ENCODE measurements at regions of chr2 and their contacts with region 1.

Region 1: DNA sequence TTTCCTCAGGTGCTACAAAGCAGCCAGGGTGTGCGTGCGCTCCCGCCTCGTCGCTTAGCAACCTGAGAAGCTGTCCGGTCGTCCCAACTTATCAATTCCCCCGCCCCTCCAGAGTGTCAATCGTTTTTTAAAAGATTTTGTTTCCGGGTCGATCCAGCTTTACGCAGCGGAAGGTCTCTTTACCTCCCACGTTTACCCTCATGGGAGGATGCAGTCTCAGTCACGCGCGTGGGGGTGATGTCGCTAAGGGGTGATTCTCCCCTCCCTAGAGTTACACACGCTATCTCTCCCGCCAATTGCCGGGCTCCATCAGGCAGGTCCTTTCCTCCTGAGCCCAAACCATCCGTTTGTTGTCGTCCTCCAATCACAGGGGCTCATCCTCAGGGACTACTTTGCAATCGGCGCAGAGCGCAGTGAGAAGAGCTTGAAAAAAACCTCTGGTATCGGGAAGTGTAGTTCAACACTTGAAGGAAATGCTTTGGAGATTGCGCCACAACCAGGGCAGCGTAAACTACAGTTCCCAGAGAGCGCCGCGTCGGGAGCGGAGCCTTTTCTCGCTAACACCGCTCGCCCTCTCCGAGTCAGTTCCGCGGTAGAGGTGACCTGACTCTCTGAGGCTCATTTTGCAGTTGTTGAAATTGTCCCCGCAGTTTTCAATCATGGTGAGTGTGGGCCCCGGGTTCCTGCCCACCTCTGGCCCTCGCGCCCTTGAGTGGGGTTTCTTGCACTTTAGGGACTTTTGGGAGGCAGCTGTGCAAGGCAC is at the starts of genes MDH1 and WDPCP:
- DNase-seq: peak; percentile 86 to 99 (median 88)
- ATAC-seq: peak; percentile 86
- H3K4me3 ChIP-seq: peak within 1 kb of the TSS; percentile 96
- H3K4me3 Mint-ChIP-seq: peak within 1 kb of the TSS; percentile 93
- H3K27ac ChIP-seq: peak within 1 kb of the TSS; percentile 76 to 95
- H3K27ac Mint-ChIP-seq: peak within 1 kb of the TSS; percentile 87
- H3K4me1 ChIP-seq: peaks cover 19% of the 10 kb centered on the region
- H3K4me1 Mint-ChIP-seq: peaks cover 58% of the 10 kb centered on the region
- H3K27me3 ChIP-seq: no peaks in the 10 kb centered on the region
- H3K27me3 Mint-ChIP-seq: no peaks in the 10 kb centered on the region
- CTCF ChIP-seq: no peak
- total RNA-seq, gene MDH1: 96.3 to 97.6 TPM
- total RNA-seq, gene WDPCP: 8.7 to 9.9 TPM

Region 2: DNA sequence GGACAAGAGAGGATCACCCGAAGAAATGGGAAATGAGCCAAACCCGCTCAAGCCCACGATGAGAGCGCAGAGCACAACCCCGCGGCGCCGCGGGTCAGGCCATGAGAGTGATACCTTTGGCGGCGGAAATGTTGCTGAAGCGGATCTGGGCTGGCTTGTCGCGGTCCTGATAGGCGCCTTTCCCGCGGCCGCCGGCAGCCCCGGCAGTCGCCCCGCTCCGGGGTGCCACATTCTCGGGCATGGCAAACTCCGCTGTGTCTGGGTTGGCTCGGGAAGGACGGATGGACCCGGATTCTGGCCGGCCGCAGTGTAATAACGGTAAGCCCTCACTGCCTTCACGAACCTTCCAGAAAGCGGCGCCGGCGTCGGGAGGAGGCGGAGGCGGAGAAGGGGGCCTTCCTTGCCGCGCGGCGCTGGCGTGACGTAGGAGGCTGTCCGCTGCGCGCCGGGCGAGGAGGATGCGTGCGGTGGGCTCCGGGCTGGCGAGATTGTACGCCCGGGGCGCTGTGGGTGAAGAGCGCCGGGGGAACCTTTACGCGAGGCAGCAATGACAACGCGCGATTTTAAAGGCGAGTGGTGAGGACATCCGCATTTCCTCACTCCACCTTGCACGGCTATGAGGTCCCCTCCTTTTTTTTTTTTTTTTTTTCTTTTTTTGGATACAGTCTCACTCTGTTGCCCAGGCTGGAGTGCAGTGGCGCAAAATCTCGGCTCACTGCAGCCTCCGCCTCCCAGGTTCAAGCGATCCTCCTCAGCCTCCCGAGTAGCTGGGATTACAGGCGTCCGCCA is 1700.1 kb before region 1 on chr2 and contains the start of gene CCT4:
- CTCF ChIA-PET with region 1: no interaction called
- POLR2A ChIA-PET with region 1: no interaction called
- intact Hi-C with region 1: loop called in 1 of 2 experiments (anchors 5 kb)
- DNase-seq: peak; percentile 83 to 96 (median 88)
- ATAC-seq: peak; percentile 79
- H3K4me3 ChIP-seq: peak within 1 kb of the TSS; percentile 79
- H3K4me3 Mint-ChIP-seq: peak within 1 kb of the TSS; percentile 100
- H3K27ac ChIP-seq: peak within 1 kb of the TSS; percentile 90 to 98
- H3K27ac Mint-ChIP-seq: peak within 1 kb of the TSS; percentile 100
- H3K4me1 ChIP-seq: peaks cover 19% of the 10 kb centered on the region
- H3K4me1 Mint-ChIP-seq: peaks cover 38% of the 10 kb centered on the region
- H3K27me3 ChIP-seq: no peaks in the 10 kb centered on the region
- H3K27me3 Mint-ChIP-seq: no peaks in the 10 kb centered on the region
- CTCF ChIP-seq: no peak
- total RNA-seq, gene CCT4: 100 to 114 TPM

Region 3: DNA sequence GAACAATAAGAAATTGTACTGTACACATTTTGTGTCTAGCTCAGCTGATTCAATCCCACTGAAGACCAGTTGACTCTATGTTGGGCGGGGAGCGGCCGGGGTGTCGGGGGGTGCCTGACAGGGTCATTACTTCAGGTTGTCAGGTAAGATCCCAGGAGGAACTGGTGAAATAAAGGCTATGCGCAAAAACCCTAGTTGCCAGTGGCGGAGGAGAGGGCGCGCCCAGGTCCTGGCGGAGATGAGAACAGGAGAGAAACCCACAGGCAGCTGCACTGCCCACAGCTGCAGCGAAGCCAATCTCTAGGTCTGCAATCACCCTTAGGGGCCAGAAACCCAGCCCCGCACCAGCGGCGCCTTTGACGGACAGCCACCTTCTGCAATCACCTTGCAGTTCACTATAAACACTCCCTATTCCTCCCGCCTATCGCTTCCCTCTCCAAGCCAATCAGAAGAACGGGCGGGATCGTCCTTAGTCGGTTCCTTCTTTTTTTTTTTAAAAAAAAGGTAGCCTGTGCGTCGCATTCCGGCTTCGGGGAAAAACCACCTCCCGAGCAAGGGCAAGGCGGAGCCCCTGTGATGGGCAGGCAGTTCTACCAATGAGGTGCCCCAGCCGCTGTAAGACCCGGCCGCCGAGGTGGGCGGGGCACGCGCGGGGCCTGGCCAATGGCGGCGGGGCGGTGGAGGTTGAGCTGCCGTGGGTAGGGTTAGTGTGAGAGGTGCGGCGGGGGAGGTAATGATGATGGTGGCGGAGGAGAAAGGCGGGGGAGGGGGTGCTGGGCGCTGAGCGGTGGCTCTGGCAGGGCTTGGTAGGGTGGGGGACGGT is 883.3 kb before region 1 on chr2 and contains the start of gene EHBP1:
- CTCF ChIA-PET with region 1: no interaction called
- POLR2A ChIA-PET with region 1: interaction called, 4 read pairs
- intact Hi-C with region 1: loop called in 1 of 2 experiments (anchors 5 kb)
- DNase-seq: peak; percentile 93 to 99 (median 97)
- ATAC-seq: peak; percentile 96
- H3K4me3 ChIP-seq: peak within 1 kb of the TSS; percentile 80
- H3K4me3 Mint-ChIP-seq: peak within 1 kb of the TSS; percentile 91
- H3K27ac ChIP-seq: peak within 1 kb of the TSS in 1 of 2 donors; percentile 24
- H3K27ac Mint-ChIP-seq: peak within 1 kb of the TSS; percentile 88
- H3K4me1 ChIP-seq: peaks cover 21% of the 10 kb centered on the region
- H3K4me1 Mint-ChIP-seq: peaks cover 36% of the 10 kb centered on the region
- H3K27me3 ChIP-seq: no peaks in the 10 kb centered on the region
- H3K27me3 Mint-ChIP-seq: no peaks in the 10 kb centered on the region
- CTCF ChIP-seq: no peak
- total RNA-seq, gene EHBP1: 21.4 to 22.3 TPM

Region 4: GRCh38 chr2:63600881-63601460 is 12.4 kb after region 1 on chr2:
- CTCF ChIA-PET with region 1: no interaction called
- POLR2A ChIA-PET with region 1: interaction called, 21 read pairs
- intact Hi-C with region 1: no loop called
- DNase-seq: no peak
- ATAC-seq: no peak
- H3K4me3 ChIP-seq: no peak overlapping the region
- H3K4me3 Mint-ChIP-seq: no peak overlapping the region
- H3K27ac ChIP-seq: no peak overlapping the region
- H3K27ac Mint-ChIP-seq: no peak overlapping the region
- H3K4me1 ChIP-seq: no peaks in the 10 kb centered on the region
- H3K4me1 Mint-ChIP-seq: no peaks in the 10 kb centered on the region
- H3K27me3 ChIP-seq: no peaks in the 10 kb centered on the region
- H3K27me3 Mint-ChIP-seq: no peaks in the 10 kb centered on the region
- CTCF ChIP-seq: no peak

Region 5: DNA sequence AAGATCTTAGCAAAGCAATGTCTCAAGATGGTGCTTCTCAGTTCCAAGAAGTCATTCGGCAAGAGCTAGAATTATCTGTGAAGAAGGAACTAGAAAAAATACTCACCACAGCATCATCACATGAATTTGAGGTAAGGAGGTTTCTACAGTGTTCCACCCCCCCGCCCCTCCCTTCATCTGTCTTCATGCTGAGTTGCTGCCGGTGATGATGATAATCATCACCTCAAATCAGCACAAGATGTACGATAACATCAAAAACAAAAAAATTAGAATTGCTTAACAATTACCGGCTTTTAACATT is 267.7 kb after region 1 on chr2:
- CTCF ChIA-PET with region 1: interaction called, 6 read pairs
- POLR2A ChIA-PET with region 1: interaction called, 5 read pairs
- intact Hi-C with region 1: loop called (anchors 1 to 5 kb)
- DNase-seq: peak in 13 of 14 experiments; percentile 21 to 91 (median 56)
- ATAC-seq: peak; percentile 93
- H3K4me3 ChIP-seq: peak overlapping the region; percentile 8
- H3K4me3 Mint-ChIP-seq: peak overlapping the region; percentile 81
- H3K27ac ChIP-seq: peak overlapping the region; percentile 56 to 78
- H3K27ac Mint-ChIP-seq: peak overlapping the region; percentile 99
- H3K4me1 ChIP-seq: peaks cover 35% of the 10 kb centered on the region
- H3K4me1 Mint-ChIP-seq: peaks cover 67% of the 10 kb centered on the region
- H3K27me3 ChIP-seq: no peaks in the 10 kb centered on the region
- H3K27me3 Mint-ChIP-seq: no peaks in the 10 kb centered on the region
- CTCF ChIP-seq: no peak

Region 6: DNA sequence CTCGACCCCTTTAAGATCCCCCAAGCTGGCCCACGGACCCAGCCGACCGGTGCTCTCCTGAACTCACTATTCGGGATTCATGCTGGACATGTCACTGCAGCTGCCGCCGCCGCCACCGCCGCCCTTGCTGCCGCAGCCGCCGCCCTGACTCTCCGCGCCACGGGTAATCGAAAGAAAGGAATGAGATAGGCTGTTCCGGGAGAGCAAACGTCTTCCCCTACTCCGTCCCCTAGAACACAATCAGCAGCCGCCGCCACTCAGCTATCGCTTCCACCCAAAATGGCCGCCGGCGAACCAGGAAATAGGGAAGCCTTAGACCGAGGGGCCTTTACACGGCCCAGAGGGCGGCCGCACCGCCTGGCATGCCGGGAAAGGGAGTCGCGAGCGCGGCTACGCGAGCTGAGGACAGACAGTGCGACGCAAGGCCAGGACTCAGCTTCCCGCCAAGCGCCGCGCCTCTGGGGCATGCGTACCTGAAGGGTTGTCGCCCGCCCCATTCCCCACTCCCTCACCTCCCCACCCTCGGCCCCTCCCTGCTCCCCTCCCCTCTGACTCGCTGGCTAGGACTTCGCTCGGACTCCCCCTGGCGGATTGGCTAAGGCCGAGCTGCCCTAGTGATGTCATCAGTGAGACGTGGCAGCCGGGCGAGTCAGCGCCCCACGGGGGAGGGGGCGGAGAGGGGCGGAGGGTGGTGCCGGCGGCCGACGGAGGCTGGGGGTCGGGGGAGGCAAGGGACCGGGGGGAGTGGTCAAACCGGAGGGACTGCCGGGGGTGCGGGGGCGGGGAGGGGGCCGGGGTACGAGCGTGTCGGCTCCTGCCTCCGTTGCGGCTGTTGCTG is 1541.5 kb after region 1 on chr2 and contains the start of gene RAB1A:
- CTCF ChIA-PET with region 1: no interaction called
- POLR2A ChIA-PET with region 1: interaction called, 11 read pairs
- intact Hi-C with region 1: no loop called
- DNase-seq: peak; percentile 98 to 100 (median 99)
- ATAC-seq: peak; percentile 89
- H3K4me3 ChIP-seq: peak within 1 kb of the TSS; percentile 80
- H3K4me3 Mint-ChIP-seq: peak within 1 kb of the TSS; percentile 100
- H3K27ac ChIP-seq: peak within 1 kb of the TSS; percentile 95
- H3K27ac Mint-ChIP-seq: peak within 1 kb of the TSS; percentile 98
- H3K4me1 ChIP-seq: peaks cover 30% of the 10 kb centered on the region
- H3K4me1 Mint-ChIP-seq: peaks cover 45% of the 10 kb centered on the region
- H3K27me3 ChIP-seq: no peaks in the 10 kb centered on the region
- H3K27me3 Mint-ChIP-seq: no peaks in the 10 kb centered on the region
- CTCF ChIP-seq: peak; percentile 37
- total RNA-seq, gene RAB1A: 85.3 to 87.6 TPM

Measured in CD4-positive, alpha-beta T cell (primary cell).